GM10248 (cell line): ENCODE measurements at regions of chr11 and their contacts with region 1.

Region 1: GRCh38 chr11:93652161-93652597 is 9.3 kb upstream of the CEP295 start:
- DNase-seq: peak; percentile 18
- CTCF ChIP-seq: peak; percentile 65

Region 2: GRCh38 chr11:93225662-93226061 is 426.5 kb before region 1 on chr11:
- CTCF ChIA-PET with region 1: interaction called, 15 read pairs
- POLR2A ChIA-PET with region 1: no interaction called
- DNase-seq: peak; percentile 17
- CTCF ChIP-seq: peak; percentile 10

Region 3: DNA sequence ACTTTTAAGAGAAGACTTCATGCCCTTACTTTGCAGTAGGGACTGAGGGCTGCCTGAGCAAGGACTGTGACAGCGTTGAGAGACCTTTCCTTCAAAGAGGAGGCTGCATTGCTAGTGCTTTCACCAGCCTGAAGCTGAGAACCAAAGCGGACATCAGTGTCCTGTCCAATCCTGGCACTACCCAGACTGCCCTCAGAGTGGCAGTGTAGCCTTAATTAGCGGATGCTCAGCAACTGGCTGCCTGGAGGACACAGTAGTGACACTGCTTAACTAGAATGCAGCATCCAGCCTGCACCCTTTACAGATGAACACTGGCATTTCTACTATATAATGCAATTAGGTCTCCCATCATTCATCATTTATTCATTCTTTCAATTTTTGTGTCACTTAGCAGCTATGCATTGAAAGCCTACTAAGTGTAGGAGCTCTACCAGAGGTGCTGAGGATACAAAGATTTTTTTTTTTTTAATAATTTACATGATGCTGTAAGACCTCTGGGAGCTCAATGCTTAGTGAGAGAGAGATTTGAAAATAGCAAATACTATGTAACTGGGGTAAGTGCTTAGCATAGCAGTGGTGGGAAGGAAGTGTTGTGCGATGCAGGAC is 417.5 kb before region 1 on chr11:
- CTCF ChIA-PET with region 1: interaction called, 90 read pairs
- POLR2A ChIA-PET with region 1: no interaction called
- DNase-seq: peak; percentile 69
- CTCF ChIP-seq: peak; percentile 98

Region 4: GRCh38 chr11:93541884-93542810 is 110.0 kb before region 1 on chr11:
- CTCF ChIA-PET with region 1: interaction called, 11 read pairs
- POLR2A ChIA-PET with region 1: no interaction called
- DNase-seq: peak; percentile 73
- CTCF ChIP-seq: no peak

Region 5: GRCh38 chr11:93639548-93639947 is 12.6 kb before region 1 on chr11:
- CTCF ChIA-PET with region 1: interaction called, 15 read pairs
- POLR2A ChIA-PET with region 1: no interaction called
- DNase-seq: no peak
- CTCF ChIP-seq: no peak

Region 6: DNA sequence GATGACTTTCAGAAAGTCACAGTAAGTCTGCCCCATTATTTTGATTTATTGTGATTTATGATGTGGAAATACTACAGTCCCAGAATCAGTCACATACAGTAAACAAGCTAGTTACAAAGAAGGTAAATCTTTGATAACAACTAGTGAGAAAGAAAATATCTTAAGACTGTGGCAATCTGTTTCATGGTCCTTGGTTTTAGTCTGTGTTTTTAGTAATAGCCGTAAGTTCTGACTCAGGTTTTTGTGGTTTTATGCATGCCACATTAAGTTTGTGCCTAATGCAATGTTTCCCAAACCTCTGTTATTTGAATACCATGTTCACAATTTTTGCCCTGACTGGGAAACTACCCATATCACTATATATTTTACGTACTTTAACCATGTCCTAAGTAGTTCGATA is 16.0 kb after region 1 on chr11:
- CTCF ChIA-PET with region 1: interaction called, 21 read pairs
- POLR2A ChIA-PET with region 1: no interaction called
- DNase-seq: no peak
- CTCF ChIP-seq: no peak